ENCODE measurements at regions of chr6 and their contacts with region 1.

Region 1: GRCh38 chr6:32127717-32128592 is at the start of gene ATF6B:
- DNase-seq: peak; percentile 99
- H3K4me3 ChIP-seq: peak within 1 kb of the TSS; percentile 80 to 99 (median 82)
- H3K27ac ChIP-seq: peak within 1 kb of the TSS; percentile 70
- H3K4me1 ChIP-seq: peaks cover 18% of the 10 kb centered on the region
- H3K27me3 ChIP-seq: no peaks in the 10 kb centered on the region
- CTCF ChIP-seq: no peak
- total RNA-seq, gene ATF6B: 20.3 to 69.0 TPM

Region 2: GRCh38 chr6:31945507-31946369 is 182.2 kb before region 1 on chr6 and contains the start of gene CFB:
- CTCF ChIA-PET with region 1: no interaction called
- dilution Hi-C with region 1: no loop called
- in situ Hi-C with region 1: no loop called
- intact Hi-C with region 1: no loop called
- DNase-seq: peak; percentile 95
- H3K4me3 ChIP-seq: peak within 1 kb of the TSS in 2 of 3 experiments; percentile 4 to 30
- H3K27ac ChIP-seq: peak within 1 kb of the TSS; percentile 65
- H3K4me1 ChIP-seq: peaks cover 19% of the 10 kb centered on the region
- H3K27me3 ChIP-seq: no peaks in the 10 kb centered on the region
- CTCF ChIP-seq: no peak
- total RNA-seq, gene CFB: 1.7 to 7.9 TPM

Region 3: GRCh38 chr6:32092760-32093497 is 35.0 kb before region 1 on chr6:
- CTCF ChIA-PET with region 1: interaction called, 6 read pairs
- dilution Hi-C with region 1: loop called (anchors 5 kb)
- in situ Hi-C with region 1: no loop called
- intact Hi-C with region 1: no loop called
- DNase-seq: no peak
- H3K4me3 ChIP-seq: no peak overlapping the region
- H3K27ac ChIP-seq: no peak overlapping the region
- H3K4me1 ChIP-seq: peaks cover 14% of the 10 kb centered on the region
- H3K27me3 ChIP-seq: peaks cover 33% of the 10 kb centered on the region
- CTCF ChIP-seq: no peak

Region 4: GRCh38 chr6:32177788-32178546 is 50.0 kb after region 1 on chr6 and contains the start of gene RNF5:
- CTCF ChIA-PET with region 1: no interaction called
- dilution Hi-C with region 1: loop called (anchors 5 kb)
- in situ Hi-C with region 1: no loop called
- intact Hi-C with region 1: loop called (anchors 1 kb)
- DNase-seq: peak; percentile 100
- H3K4me3 ChIP-seq: peak within 1 kb of the TSS; percentile 52 to 94 (median 69)
- H3K27ac ChIP-seq: peak within 1 kb of the TSS; percentile 94
- H3K4me1 ChIP-seq: peaks cover 36% of the 10 kb centered on the region
- H3K27me3 ChIP-seq: no peaks in the 10 kb centered on the region
- CTCF ChIP-seq: no peak
- total RNA-seq, gene RNF5: 28.4 to 28.7 TPM

Region 5: DNA sequence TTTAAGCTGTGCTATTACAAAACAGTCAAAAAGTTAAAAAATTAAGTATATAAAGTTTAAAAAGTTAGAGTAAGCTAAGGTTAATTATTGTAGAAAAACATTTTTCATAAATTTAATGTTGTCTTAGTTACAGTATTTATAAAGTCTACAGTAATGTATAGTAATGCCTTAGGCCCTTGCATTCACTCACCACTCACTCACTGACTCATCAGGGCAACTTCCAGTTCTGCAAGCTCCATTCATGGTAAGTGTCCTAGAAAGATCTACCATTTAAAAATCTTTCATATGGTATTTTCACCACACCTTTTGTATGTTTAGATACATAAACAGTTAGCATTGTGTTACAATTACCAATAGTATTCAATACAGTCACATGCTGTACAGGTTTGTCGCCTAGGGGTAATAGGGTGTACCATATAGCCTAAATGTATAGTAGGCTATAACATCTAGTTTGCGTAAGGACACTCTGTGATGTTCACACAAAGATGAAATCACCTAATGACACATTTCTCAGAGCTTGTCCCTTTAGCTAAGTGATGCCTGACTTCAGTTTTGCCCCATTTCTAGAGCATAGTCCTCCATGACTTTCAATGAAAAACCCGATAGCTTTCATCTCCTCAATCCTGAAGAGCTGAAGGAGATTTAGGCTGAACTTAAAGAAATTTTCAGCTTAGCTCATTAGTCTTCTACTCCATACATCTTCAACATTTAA is 296.8 kb after region 1 on chr6:
- CTCF ChIA-PET with region 1: no interaction called
- dilution Hi-C with region 1: no loop called
- in situ Hi-C with region 1: no loop called
- intact Hi-C with region 1: no loop called
- DNase-seq: peak; percentile 62
- H3K4me3 ChIP-seq: no peak overlapping the region
- H3K27ac ChIP-seq: no peak overlapping the region
- H3K4me1 ChIP-seq: peaks cover 4% of the 10 kb centered on the region
- H3K27me3 ChIP-seq: peaks cover 3% of the 10 kb centered on the region
- CTCF ChIP-seq: no peak

Measured in mammary epithelial cell (primary cell).